Vagina (tissue), 2 donors: ENCODE measurements at regions of chr21 and their contacts with region 1.

Region 1: GRCh38 chr21:44338971-44339910 is at the start of gene CFAP410:
- DNase-seq: peak in 1 of 2 donors; percentile 96
- H3K4me3 ChIP-seq: peak within 1 kb of the TSS; percentile 71 to 90
- H3K27ac ChIP-seq: peak within 1 kb of the TSS; percentile 94
- H3K4me1 ChIP-seq: peaks cover 29% of the 10 kb centered on the region
- H3K27me3 ChIP-seq: no peaks in the 10 kb centered on the region
- CTCF ChIP-seq: peak in 1 of 3 experiments; percentile 7
- POLR2A ChIP-seq: peak in 1 of 2 donors; percentile 84
- total RNA-seq, gene CFAP410: 24.3 TPM

Region 2: GRCh38 chr21:44801468-44802395 is 462.5 kb after region 1 on chr21 and contains the start of gene UBE2G2:
- intact Hi-C with region 1: loop called (anchors 10 kb)
- DNase-seq: no peak
- H3K4me3 ChIP-seq: peak within 1 kb of the TSS; percentile 81 to 95
- H3K27ac ChIP-seq: peak within 1 kb of the TSS; percentile 71
- H3K4me1 ChIP-seq: peaks cover 26% of the 10 kb centered on the region
- H3K27me3 ChIP-seq: no peaks in the 10 kb centered on the region
- CTCF ChIP-seq: peak in 1 of 3 experiments; percentile 9
- POLR2A ChIP-seq: peak in 1 of 2 donors; percentile 27
- total RNA-seq, gene UBE2G2: 96.5 TPM

Region 3: GRCh38 chr21:44873356-44874239 is 534.4 kb after region 1 on chr21 and contains the start of gene PTTG1IP:
- intact Hi-C with region 1: loop called (anchors 10 kb)
- DNase-seq: peak in 1 of 2 donors; percentile 95
- H3K4me3 ChIP-seq: peak within 1 kb of the TSS; percentile 79 to 88
- H3K27ac ChIP-seq: peak within 1 kb of the TSS; percentile 90
- H3K4me1 ChIP-seq: peaks cover 62% of the 10 kb centered on the region
- H3K27me3 ChIP-seq: no peaks in the 10 kb centered on the region
- CTCF ChIP-seq: no peak
- POLR2A ChIP-seq: peak; percentile 59 to 72
- total RNA-seq, gene PTTG1IP: 165 TPM